ENCODE measurements at regions of chr7 and their contacts with region 1.

Region 1: DNA sequence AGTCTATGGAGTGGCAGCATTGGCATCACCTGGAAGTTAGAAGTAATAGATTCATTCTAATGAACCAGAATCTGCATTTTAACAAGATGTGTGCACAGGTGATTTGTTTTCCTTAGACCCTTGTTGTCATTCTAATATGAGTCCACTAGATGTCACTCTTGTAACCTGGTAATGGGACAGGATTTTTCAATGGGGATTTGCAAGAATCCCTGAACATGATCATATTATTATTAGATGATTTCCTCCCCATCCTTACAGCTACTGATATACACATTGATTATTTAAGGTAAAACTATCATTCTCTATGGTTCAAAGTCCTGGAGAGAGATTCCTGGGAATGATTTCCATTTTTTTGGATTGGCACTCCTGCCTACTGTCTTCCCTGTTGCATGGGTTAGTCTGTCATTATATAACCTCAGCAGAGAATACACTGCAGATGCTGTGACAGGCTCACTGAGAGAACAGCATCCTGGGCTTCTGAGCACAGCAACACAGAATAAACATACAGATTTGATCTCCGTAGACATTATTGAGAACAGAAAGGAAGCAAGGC is 194.9 kb downstream of the SUGCT start:
- DNase-seq: no peak
- ATAC-seq: peak in 1 of 2 donors; percentile 58
- H3K4me3 ChIP-seq: no peak overlapping the region
- H3K27ac ChIP-seq: no peak overlapping the region
- H3K4me1 ChIP-seq: no peaks in the 10 kb centered on the region
- H3K27me3 ChIP-seq: no peaks in the 10 kb centered on the region

Region 2: GRCh38 chr7:40162516-40162915 is 167.2 kb before region 1 on chr7:
- intact Hi-C with region 1: no loop called
- DNase-seq: no peak
- ATAC-seq: no peak
- H3K4me3 ChIP-seq: no peak overlapping the region
- H3K27ac ChIP-seq: no peak overlapping the region
- H3K4me1 ChIP-seq: no peaks in the 10 kb centered on the region
- H3K27me3 ChIP-seq: no peaks in the 10 kb centered on the region

Region 3: GRCh38 chr7:40604601-40605438 is 275.1 kb after region 1 on chr7:
- intact Hi-C with region 1: loop called in 2 of 4 experiments (anchors 10 kb)
- DNase-seq: peak; percentile 57 to 83 (median 82)
- ATAC-seq: peak; percentile 75 to 89
- H3K4me3 ChIP-seq: no peak overlapping the region
- H3K27ac ChIP-seq: no peak overlapping the region
- H3K4me1 ChIP-seq: no peaks in the 10 kb centered on the region
- H3K27me3 ChIP-seq: no peaks in the 10 kb centered on the region

Region 4: DNA sequence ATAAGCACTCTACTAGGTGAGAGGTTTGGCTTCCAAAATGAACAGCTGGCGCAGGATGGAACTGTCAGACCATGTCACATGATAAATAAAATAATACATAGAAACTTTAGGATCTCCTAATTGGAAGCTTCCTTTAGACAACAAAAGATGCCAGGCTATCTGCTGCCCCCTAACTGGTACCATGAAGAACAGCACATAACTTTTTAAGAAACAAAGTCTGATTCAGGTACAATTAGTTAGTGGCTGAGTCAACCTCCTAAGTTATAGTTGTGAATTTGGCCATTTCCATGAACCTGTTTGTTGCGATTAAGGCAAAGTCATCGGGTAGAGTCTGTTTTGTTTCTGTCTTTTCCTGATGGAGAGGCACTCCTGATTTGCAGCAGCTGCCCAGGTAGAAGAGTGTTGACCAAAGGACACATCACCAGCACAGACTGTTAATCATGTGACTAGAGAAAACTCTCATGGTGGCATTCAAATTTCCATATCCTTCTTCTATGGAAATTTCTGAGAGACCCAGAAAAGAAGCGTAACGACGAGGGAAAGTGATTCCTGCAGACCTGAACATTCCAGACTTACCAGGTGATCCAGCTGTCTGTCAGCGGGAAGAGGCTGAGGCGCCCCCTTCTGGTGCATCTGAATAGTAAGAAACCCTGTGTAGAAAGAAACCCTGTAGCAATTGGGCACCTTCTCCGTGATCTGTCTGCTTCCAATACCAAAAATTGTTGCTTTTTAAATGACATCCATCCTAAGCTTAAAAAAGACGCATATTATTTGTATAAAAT is 1381.8 kb after region 1 on chr7:
- intact Hi-C with region 1: loop called in 2 of 4 experiments (anchors 5 to 10 kb)
- DNase-seq: peak in 1 of 3 donors; percentile 50
- ATAC-seq: no peak
- H3K4me3 ChIP-seq: no peak overlapping the region
- H3K27ac ChIP-seq: no peak overlapping the region
- H3K4me1 ChIP-seq: no peaks in the 10 kb centered on the region
- H3K27me3 ChIP-seq: no peaks in the 10 kb centered on the region

Measured in right cardiac atrium (tissue), 5 donors.